HEK293T (cell line): ENCODE measurements at regions of chr3 and their contacts with region 1.

Region 1: DNA sequence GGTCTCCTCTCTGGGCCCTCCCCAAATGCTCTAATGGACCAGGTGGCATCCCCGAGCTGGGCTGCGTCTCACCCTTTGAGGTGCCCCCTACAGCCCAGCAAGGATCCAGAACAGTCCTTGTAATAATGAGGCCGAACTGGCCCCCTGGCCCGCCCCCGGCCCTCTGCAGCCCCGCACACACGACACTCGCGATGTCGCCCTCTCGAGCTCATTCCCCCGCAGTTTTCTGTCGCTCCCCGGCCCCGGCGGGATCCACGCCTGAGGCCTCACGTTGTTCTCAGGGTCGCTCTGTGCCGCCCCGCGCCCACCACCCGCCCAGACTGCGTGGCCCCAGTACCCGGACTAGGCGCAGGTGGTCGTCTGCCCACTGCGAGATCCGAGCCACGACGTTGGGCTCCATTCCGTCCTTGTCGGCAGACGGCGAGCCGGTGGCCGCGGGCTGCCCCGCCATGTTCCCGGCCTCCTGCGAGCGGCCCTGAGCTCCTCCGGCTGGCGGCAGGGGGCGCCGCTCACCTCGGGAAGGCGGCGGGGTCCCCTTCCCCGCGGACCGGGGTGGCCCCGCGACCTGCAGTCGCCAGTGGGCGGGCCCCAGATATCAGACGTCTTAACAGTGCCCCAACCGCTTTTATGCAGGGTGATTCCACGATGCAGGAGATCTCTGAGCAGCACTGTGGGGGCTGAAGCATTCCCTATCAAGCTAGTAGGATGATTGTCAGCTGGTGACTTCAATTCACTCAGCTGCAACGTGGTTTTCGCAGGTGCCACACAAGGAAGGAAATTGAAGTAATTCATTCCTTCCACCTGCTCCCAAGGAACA is at the start of gene C3orf33:
- DNase-seq: peak; percentile 81

Region 2: GRCh38 chr3:155651489-155652218 is 154.4 kb before region 1 on chr3:
- CTCF ChIA-PET with region 1: no interaction called
- POLR2A ChIA-PET with region 1: no interaction called
- DNase-seq: no peak

Region 3: DNA sequence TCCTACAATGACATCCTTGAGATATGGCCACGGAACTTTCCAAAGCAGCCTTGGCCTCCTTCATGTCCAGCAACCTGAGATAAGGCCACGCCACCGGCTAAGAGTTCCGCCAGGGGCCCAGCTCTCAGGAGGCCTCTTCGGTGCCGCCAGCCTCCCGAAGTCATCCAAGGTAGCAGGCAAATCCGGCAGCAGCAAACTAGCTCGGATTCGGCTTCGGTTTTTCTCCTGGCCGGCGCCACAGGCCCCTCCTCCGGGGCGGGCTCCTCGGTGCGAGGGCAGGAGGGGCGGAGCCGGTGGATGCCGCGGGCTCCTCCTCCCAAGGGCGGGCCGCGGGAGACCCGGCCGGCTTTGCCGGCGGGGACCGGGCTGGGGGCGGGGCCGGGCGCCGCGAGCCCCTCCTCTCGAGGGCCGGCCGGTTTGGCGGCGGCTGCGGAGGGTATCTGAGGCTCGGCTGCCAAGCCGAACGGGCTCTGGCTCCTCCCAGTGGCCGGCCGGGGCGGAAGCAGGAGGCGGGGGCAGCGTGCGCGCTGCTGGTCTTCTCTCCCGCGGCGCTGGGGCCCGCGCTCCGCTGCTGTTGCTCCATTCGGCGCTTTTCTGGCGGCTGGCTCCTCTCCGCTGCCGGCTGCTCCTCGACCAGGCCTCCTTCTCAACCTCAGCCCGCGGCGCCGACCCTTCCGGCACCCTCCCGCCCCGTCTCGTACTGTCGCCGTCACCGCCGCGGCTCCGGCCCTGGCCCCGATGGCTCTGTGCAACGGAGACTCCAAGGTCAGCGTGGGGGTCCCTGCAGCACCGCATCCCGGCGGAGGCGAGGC is 64.3 kb after region 1 on chr3 and contains the start of gene GMPS:
- CTCF ChIA-PET with region 1: interaction called, 9 read pairs
- POLR2A ChIA-PET with region 1: interaction called, 12 read pairs
- DNase-seq: peak; percentile 92